PC-3 (cell line): ENCODE measurements at regions of chr4 and their contacts with region 1.

Region 1: DNA sequence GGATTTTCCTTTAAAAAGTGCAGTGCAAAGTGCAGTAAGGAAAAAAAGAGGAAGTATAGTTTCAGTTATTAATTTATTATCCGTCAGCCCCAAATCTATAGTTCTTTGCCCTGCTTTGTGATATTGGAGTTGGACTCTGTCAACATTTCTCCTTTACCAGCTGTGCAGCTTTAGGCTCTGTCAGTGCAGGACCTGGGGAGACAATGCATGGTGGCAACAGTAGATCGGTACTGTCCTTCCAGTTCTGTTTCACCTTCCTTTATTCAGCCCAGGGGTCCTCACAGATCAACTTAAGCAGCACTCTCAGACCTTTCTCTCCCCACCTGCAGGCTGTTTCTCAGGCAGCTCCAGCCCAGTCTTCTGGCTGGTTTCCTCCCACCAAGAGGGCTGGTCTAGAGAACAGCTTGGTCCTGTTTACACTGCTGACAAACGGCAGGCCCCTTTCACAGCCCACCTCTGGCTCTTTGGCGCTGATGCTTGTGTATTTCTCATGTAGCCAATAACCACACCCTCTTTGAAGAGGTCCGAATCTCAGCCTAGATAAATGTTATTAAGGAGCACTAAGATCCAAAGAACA is 71.6 kb downstream of the MCUB start:
- DNase-seq: peak; percentile 11
- ATAC-seq: peak; percentile 74
- H3K4me3 ChIP-seq: no peak overlapping the region
- H3K27ac ChIP-seq: peak overlapping the region; percentile 49; the same call in 1 of the 2 replicates
- H3K4me1 ChIP-seq: peaks cover 26% of the 10 kb centered on the region
- H3K27me3 ChIP-seq: no peaks in the 10 kb centered on the region
- CTCF ChIP-seq: no peak

Region 2: GRCh38 chr4:109559983-109560686 is 71.5 kb before region 1 on chr4 and contains the start of gene MCUB:
- CTCF ChIA-PET with region 1: interaction called, 6 read pairs
- POLR2A ChIA-PET with region 1: no interaction called
- intact Hi-C with region 1: loop called (anchors 2 kb)
- DNase-seq: peak; percentile 89
- ATAC-seq: peak; percentile 91
- H3K4me3 ChIP-seq: peak within 1 kb of the TSS; percentile 96
- H3K27ac ChIP-seq: peak within 1 kb of the TSS; percentile 73
- H3K4me1 ChIP-seq: peaks cover 15% of the 10 kb centered on the region
- H3K27me3 ChIP-seq: no peaks in the 10 kb centered on the region
- CTCF ChIP-seq: no peak
- total RNA-seq, gene MCUB: 18.4 and 21.7 TPM in 2 replicates

Region 3: DNA sequence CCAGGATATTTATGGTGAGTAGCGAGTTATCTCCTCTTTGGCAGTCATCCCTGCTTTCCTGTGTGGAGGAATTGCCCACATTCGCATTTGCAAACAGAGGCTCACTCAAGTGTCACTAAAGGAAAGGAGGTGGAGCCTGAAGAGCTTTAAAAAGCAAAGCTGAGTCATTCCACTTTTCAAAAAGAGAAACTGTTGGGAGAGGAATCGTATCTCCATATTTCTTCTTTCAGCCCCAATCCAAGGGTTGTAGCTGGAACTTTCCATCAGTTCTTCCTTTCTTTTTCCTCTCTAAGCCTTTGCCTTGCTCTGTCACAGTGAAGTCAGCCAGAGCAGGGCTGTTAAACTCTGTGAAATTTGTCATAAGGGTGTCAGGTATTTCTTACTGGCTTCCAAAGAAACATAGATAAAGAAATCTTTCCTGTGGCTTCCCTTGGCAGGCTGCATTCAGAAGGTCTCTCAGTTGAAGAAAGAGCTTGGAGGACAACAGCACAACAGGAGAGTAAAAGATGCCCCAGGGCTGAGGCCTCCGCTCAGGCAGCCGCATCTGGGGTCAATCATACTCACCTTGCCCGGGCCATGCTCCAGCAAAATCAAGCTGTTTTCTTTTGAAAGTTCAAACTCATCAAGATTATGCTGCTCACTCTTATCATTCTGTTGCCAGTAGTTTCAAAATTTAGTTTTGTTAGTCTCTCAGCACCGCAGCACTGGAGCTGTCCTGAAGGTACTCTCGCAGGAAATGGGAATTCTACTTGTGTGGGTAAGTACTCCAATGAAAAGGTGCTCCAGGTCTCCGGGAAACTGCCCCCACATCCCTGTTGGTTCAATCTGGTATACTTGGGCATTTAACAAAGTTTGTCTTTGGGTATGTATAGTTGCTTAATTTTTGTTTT is 281.3 kb after region 1 on chr4 and contains the start of gene EGF:
- CTCF ChIA-PET with region 1: interaction called, 10 read pairs
- POLR2A ChIA-PET with region 1: no interaction called
- intact Hi-C with region 1: no loop called
- DNase-seq: peak; percentile 71
- ATAC-seq: peak; percentile 76
- H3K4me3 ChIP-seq: peak within 1 kb of the TSS; percentile 80
- H3K27ac ChIP-seq: peak within 1 kb of the TSS; percentile 73
- H3K4me1 ChIP-seq: peaks cover 29% of the 10 kb centered on the region
- H3K27me3 ChIP-seq: no peaks in the 10 kb centered on the region
- CTCF ChIP-seq: no peak
- total RNA-seq, gene EGF: 3.9 and 6.1 TPM in 2 replicates